ENCODE measurements at regions of chrX and their contacts with region 1.

Region 1: DNA sequence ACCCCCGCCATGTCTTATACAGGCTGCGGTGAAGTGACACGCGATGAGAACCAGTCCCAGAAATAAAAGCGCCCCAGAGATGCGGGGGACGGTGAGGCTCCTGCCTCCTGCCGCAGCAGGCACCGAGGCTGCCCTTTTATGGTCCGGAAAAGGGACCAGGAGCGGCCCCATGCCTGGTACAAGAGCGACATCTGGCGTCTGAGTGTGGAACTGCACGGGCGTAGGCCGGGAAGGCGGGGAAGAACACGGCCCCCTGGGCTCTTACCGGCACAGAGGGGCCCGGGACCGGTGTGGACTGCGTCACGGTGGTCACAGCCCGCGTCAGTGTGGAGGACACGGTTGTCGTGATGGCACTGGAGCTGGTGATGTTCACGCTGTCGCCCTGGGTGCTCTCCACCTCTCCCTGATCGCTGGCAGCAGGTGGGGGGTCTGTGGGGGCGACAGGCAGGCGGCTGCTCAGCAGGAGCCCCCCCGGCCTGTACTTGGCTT is 8.9 kb upstream of the RENBP start:
- DNase-seq: peak; percentile 42 to 96 (median 72)

Region 2: GRCh38 chrX:152958524-152959465 is 994.6 kb before region 1 on chrX:
- intact Hi-C with region 1: loop called (anchors 10 kb)
- DNase-seq: peak; percentile 78 to 98 (median 88)

Region 3: DNA sequence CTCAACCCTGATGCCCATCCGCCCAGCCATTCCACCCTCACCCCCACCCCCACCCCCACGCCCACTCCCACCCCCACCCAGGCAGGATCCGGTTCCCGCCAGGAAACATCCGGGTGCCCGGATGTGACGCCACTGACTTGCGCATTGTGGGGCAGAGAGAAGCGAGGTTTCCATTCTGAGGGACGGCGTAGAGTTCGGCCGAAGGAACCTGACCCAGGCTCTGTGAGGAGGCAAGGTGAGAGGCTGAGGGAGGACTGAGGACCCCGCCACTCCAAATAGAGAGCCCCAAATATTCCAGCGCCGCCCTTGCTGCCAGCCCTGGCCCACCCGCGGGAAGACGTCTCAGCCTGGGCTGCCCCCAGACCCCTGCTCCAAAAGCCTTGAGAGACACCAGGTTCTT is 774.3 kb before region 1 on chrX and contains the start of gene MAGEA1:
- intact Hi-C with region 1: no loop called
- DNase-seq: peak in 1 of 10 donors; percentile 61

Region 4: GRCh38 chrX:153539171-153539978 is 414.0 kb before region 1 on chrX:
- intact Hi-C with region 1: loop called (anchors 5 kb)
- DNase-seq: peak; percentile 55 to 97 (median 78)

Region 5: GRCh38 chrX:153662266-153662665 is 291.1 kb before region 1 on chrX:
- intact Hi-C with region 1: no loop called
- DNase-seq: peak in 6 of 10 donors; percentile 21 to 90 (median 54)

Region 6: DNA sequence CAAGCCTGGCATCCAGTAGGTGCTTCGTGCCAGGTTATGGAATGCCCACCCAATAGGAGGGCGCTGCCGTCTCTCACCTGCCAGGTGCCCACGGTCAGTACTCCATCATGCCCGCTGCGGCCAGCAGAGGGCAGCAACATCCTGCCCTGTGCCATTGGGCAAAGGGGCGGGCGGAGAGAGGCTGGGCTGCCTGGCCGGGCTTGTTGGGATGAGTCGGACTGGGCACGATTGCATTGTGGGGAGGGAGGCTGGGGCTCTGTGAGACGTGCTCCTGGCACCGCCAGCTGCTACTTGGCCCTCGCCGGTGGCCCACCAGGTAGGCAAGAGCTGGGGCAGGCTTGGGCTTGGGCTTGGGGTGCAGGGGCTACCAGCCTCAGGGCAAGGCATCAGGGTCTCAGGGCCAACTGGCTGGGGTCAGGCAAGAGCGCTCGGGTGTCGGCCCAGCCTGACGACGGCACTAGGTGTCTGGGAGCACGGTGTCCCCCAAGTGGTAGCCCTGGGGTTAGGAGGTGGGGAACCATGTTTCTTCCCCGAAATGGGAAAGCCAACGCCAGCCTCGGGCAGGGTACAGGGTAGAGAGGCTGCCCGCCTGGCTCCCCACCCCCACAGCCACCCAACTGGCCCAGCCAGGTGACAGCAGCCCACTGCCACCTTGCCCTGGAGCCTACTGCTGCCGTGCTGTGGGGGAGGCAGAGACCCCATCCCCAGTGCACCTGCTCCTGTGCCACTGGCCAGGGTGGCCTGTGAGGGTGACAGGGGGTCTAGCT is 189.2 kb before region 1 on chrX and contains the start of gene PLXNB3:
- intact Hi-C with region 1: loop called (anchors 1 kb)
- DNase-seq: peak; percentile 76 to 98 (median 88)